Psoas muscle (tissue), 8 donors: ENCODE measurements at regions of chr20 and their contacts with region 1.

Region 1: DNA sequence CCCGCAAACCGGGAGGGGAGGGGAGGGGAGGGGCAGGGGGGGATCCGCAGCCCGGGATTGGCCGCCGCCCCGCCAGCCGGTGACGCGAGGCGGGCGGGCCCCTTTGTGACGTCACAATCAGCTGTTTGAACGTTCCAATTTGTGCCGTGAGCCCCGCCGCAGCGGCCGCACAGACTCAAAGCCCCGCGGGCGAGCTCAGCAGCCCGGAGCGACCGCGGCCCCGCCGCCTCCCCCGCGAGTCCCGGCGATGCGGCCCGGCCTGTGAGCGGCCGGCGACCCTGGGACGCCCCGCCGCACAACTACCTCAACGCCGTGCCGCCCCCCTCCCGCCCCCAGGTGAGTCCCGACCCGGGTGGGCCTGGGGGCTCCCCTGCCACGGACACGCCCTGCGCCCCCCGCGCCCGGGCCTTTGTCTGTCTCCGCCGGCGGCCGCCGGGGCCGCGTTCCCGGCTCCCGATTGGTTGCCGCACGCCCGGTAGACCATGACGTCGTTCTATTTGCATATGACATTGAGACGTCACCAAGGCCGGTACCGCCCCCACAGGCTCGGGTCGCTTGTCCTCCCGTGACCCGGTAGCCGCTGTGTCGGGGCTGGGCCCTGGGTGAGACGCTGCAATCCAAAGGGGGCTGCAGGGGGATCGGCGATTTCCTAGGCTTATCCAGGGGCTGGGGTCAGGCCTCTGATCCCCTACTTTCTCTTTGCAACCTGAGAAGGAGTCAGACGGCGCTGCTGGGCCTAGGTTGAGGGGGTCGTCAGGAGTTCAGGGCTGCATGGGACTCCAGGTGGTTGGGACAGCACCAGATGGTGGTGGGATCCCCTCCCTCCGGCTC is at the start of gene TP53INP2:
- DNase-seq: peak; percentile 93 to 96
- ATAC-seq: peak; percentile 82 to 86 (median 84)
- H3K4me3 ChIP-seq: peak within 1 kb of the TSS; percentile 81
- H3K27ac ChIP-seq: peak within 1 kb of the TSS; percentile 100
- H3K4me1 ChIP-seq: peaks cover 23% of the 10 kb centered on the region
- H3K27me3 ChIP-seq: no peaks in the 10 kb centered on the region
- CTCF ChIP-seq: no peak
- total RNA-seq, gene TP53INP2: 22.2 to 37.4 (median 27.8) TPM

Region 2: GRCh38 chr20:34538671-34539123 is 165.7 kb before region 1 on chr20:
- intact Hi-C with region 1: loop called in 1 of 2 experiments (anchors 5 kb)
- DNase-seq: peak; percentile 62 to 76
- ATAC-seq: peak; percentile 76 to 91 (median 83)
- H3K4me3 ChIP-seq: no peak overlapping the region
- H3K27ac ChIP-seq: no peak overlapping the region
- H3K4me1 ChIP-seq: no peaks in the 10 kb centered on the region
- H3K27me3 ChIP-seq: no peaks in the 10 kb centered on the region
- CTCF ChIP-seq: peak; percentile 69

Region 3: GRCh38 chr20:34558320-34559218 is 145.8 kb before region 1 on chr20 and contains the start of gene MAP1LC3A:
- intact Hi-C with region 1: loop called in 1 of 2 experiments (anchors 5 kb)
- DNase-seq: peak; percentile 95 to 97
- ATAC-seq: peak; percentile 94 to 96 (median 94)
- H3K4me3 ChIP-seq: peak within 1 kb of the TSS; percentile 82
- H3K27ac ChIP-seq: peak within 1 kb of the TSS; percentile 86
- H3K4me1 ChIP-seq: peaks cover 7% of the 10 kb centered on the region
- H3K27me3 ChIP-seq: no peaks in the 10 kb centered on the region
- CTCF ChIP-seq: no peak
- total RNA-seq, gene MAP1LC3A: 27.4 to 44.9 (median 37.5) TPM

Region 4: DNA sequence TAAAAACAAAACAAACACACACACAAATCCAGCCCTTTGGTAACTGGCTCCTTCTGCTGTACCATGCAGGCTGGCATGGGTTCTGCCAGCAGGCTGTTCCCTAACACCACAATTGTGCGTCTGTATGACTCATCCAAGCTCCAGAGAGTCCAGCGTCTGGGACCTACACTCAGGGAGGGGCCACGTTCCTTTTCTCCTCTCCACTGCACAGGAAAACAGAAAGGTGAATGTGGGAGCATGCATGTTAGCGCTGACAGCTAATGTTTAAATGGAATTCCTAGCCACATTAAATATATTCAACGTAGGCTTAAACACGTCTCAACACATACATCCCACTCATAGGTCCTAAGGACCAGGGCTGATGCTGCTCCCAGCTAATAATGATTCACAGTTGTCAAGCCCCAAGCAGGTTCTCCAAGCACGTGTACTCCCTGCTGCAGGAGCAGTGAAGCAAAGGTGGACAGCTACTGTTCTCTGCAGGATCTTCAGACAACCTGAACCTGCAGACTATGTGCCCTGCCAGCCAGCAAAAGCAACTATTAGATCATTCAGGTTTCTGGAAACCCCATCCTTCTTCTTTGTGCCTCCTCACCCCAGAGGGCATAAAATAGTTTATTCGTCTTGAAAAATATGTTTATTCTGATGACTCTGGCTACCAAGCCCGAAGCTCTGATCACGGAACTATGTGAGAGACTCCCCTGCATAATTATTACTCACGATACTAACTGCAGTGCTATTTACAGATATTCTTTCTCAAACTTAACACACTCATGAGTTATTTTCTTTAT is 125.0 kb before region 1 on chr20:
- intact Hi-C with region 1: loop called (anchors 2 to 5 kb)
- DNase-seq: peak; percentile 47 to 82
- ATAC-seq: peak; percentile 91 to 96 (median 92)
- H3K4me3 ChIP-seq: no peak overlapping the region
- H3K27ac ChIP-seq: peak overlapping the region; percentile 66
- H3K4me1 ChIP-seq: peaks cover 28% of the 10 kb centered on the region
- H3K27me3 ChIP-seq: no peaks in the 10 kb centered on the region
- CTCF ChIP-seq: peak; percentile 55